Cardiac septum (tissue), 1 donor: ENCODE measurements at regions of chr16 and their contacts with region 1.

Region 1: GRCh38 chr16:46711106-46712058 is 21.9 kb downstream of the ORC6 start:
- DNase-seq: no peak

Region 2: GRCh38 chr16:46748775-46749705 is 37.7 kb after region 1 on chr16:
- intact Hi-C with region 1: loop called (anchors 2 kb)
- DNase-seq: peak; percentile 82

Region 3: DNA sequence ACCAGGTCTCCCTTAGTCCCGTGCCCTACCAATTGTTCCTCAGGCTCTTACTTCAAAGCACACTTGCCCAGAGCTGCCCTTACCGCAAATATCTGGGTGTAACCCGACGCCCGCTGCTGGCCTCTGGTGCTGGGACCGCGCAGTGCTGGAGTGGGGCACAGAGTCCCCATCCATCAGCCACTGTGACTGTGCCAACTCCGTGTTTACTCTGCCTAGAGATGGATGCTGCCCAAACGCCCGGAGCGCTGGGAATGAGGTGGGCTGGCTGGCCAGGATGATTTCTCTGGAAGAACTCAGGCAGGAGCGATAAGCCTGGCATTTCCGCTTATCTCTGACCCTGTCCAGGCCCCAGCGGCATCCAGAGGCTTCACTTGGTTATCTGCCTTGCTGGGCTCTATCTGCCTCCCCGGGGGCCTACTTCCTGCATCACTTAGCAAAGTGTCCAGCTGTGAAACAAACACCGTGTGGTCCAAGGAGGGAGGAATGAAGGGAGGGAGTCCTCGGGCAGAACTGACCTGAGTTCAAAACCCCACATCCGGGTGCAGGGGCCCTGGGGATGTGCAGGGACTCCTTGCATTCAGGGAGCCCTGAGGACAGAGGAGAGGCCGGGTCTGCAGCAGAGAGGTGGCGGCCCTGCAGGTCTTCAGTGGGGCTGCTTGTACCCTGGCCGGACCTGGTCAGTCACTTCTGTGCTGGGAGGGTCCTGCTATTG is 46.1 kb after region 1 on chr16:
- intact Hi-C with region 1: loop called (anchors 2 kb)
- DNase-seq: peak; percentile 91